BJ (cell line): ENCODE measurements at regions of chr3 and their contacts with region 1.

Region 1: GRCh38 chr3:123732473-123733157 is 147.8 kb upstream of the HACD2 start:
- DNase-seq: no peak
- H3K4me3 ChIP-seq: no peak overlapping the region
- H3K27me3 ChIP-seq: no peaks in the 10 kb centered on the region
- CTCF ChIP-seq: no peak

Region 2: DNA sequence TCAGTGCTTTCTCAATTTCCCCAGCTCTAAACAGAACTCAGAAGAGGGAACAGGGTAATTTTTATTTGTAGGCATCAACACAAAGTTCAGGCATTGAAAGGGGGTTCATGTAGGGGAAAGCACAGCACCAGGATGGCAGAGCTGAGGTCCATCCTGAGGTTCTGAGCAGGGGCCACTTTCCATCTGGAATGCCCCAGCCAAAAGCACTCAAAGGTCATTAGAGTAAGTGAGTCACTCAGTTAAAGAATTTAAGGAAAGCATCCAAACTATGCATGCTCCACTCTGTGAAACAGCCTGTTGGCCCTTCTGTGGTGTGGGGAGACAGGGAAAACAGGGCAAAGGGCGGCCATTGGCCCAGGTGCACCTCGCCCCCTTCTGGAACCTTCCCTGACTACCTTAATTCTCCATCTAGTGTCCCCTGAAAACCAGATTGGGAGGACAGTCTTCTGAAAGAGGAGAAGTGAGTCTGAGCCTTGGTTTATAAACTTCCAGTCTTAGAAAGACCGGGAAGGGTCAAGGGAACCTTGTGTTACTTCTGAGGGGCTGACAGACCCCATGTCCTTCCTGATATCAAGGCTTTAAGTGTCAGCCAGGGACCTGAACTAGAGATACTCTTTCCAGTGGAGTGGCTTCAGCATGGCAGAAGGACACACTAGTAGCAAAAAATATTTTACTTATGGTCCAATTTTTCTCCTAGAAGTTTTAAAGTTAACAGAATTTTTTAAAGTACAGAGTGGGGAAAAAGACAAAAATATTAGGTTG is 18.2 kb after region 1 on chr3:
- CTCF ChIA-PET with region 1: interaction called, 5 read pairs
- POLR2A ChIA-PET with region 1: interaction called, 11 read pairs
- DNase-seq: peak; percentile 84
- H3K4me3 ChIP-seq: no peak overlapping the region
- H3K27me3 ChIP-seq: no peaks in the 10 kb centered on the region
- CTCF ChIP-seq: peak; percentile 32; the same call in 1 of the 2 replicates